ENCODE measurements at regions of chr12 and their contacts with region 1.

Region 1: DNA sequence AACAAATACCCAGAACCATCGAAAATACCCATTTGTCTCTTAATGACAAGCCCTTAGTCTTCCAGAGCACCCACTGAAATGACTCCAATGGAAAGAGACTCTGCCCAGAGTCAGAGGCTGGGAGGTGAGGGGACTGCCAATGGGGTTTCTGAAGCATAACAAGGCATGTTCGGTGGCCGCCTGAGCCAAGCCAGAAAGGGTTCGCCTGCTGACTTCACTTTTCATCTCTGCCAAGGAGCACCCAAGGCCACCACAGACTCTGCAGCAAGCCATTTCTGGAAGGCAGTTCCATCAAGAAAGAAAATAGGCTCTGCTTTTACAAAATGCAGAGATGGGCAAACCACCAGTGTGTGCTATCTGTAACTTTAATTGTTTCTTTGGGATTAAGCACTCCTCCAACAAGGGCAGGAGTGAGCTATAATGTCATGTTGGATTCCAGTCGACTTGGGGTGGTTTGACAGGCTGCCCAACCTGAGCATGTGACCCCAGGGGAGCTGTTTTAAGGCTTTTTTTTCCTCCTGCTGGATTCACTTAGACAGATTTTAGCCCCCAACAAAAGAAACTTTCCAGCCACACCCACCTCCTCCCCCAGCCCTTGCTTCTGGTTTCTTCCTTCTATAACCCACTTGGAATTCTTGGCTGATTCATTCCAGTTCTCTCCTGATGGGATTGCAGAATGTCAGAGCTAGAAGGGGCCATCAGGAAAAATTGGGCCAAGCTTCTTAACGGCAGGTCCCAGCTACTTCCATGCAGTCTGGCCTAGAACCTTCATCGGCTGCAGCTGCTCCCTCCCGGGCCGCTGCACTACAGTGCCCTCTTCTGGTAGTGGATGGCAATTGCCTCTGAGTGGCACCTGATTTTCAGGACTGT is 24.1 kb downstream of the CKAP4 start:
- DNase-seq: peak; percentile 73 to 84 (median 83)
- ATAC-seq: peak; percentile 96
- H3K4me3 ChIP-seq: no peak overlapping the region
- H3K27ac ChIP-seq: no peak overlapping the region
- H3K4me1 ChIP-seq: no peaks in the 10 kb centered on the region
- H3K27me3 ChIP-seq: peaks cover 5 to 8% of the 10 kb centered on the region in 2 experiments; a peak in 3 of 5 replicates
- CTCF ChIP-seq: peak; percentile 84 to 93 (median 85)
- EP300 ChIP-seq: no peak
- POLR2A ChIP-seq: no peak
- RAD21 ChIP-seq: peak; percentile 56 to 79

Region 2: GRCh38 chr12:105420659-105421240 is 803.0 kb before region 1 on chr12:
- CTCF ChIA-PET with region 1: interaction called, 10 read pairs
- POLR2A ChIA-PET with region 1: no interaction called
- in situ Hi-C with region 1: loop called (anchors 10 kb)
- intact Hi-C with region 1: no loop called
- DNase-seq: peak; percentile 67 to 71 (median 70)
- ATAC-seq: peak; percentile 90
- H3K4me3 ChIP-seq: no peak overlapping the region
- H3K27ac ChIP-seq: no peak overlapping the region
- H3K4me1 ChIP-seq: no peaks in the 10 kb centered on the region
- H3K27me3 ChIP-seq: no peaks in the 10 kb centered on the region
- CTCF ChIP-seq: peak; percentile 77 to 90 (median 82)
- EP300 ChIP-seq: no peak
- POLR2A ChIP-seq: no peak
- RAD21 ChIP-seq: peak; percentile 94

Region 3: DNA sequence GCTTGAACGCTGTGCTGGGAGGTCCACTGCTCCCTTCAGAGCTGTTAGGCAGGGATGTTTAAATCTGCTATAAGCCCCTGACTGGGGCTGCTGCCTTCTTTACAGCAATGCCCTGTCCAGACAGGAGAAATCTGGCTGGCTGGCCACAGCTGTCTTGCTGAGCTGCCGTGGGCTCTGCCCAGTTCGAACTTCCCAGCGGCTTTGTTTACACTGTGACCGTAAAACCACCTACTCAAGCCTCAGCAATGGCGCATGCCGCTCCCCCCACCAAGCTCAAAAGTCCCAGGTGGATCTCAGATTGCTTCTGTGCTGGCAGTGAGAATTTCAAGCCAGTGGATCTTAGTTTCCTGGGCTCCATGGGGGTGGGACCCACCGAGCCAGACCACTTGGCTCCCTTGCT is 11.7 kb before region 1 on chr12:
- CTCF ChIA-PET with region 1: no interaction called
- POLR2A ChIA-PET with region 1: no interaction called
- in situ Hi-C with region 1: no loop called
- intact Hi-C with region 1: no loop called
- DNase-seq: no peak
- ATAC-seq: no peak
- H3K4me3 ChIP-seq: no peak overlapping the region
- H3K27ac ChIP-seq: no peak overlapping the region
- H3K4me1 ChIP-seq: no peaks in the 10 kb centered on the region
- H3K27me3 ChIP-seq: peaks cover 0 to 13% of the 10 kb centered on the region in 2 experiments; a peak in 2 of 5 replicates
- CTCF ChIP-seq: no peak
- EP300 ChIP-seq: no peak
- POLR2A ChIP-seq: no peak
- RAD21 ChIP-seq: no peak

Region 4: DNA sequence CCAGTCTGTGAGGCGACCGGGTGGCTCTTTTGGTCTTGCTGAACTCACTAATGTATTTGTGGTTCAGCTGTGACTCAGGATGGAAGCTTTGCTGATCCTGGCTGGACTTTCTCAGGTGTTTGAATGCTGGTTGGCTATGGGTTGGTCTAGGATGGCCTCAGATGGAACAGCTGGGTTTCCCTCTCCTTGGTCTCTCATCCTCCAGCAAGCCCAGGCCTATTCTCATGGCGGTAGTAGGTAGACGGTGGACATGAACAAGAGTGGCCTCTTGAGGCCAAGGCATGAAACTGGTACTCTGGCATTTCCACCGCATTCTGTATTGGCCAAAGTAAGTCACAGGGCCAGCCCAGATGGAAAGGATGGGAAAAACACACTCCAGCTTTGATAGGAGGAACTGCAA is 122.0 kb after region 1 on chr12:
- CTCF ChIA-PET with region 1: interaction called, 13 read pairs
- POLR2A ChIA-PET with region 1: no interaction called
- in situ Hi-C with region 1: loop called (anchors 5 kb)
- intact Hi-C with region 1: loop called (anchors 1 kb)
- DNase-seq: peak in 3 of 4 experiments; percentile 13 to 60 (median 27)
- ATAC-seq: peak; percentile 98
- H3K4me3 ChIP-seq: no peak overlapping the region
- H3K27ac ChIP-seq: no peak overlapping the region
- H3K4me1 ChIP-seq: no peaks in the 10 kb centered on the region
- H3K27me3 ChIP-seq: peaks cover 6 to 7% of the 10 kb centered on the region in 2 experiments; a peak in 4 of 5 replicates
- CTCF ChIP-seq: peak; percentile 58 to 70 (median 67)
- EP300 ChIP-seq: no peak
- POLR2A ChIP-seq: no peak
- RAD21 ChIP-seq: peak in 1 of 2 experiments; percentile 69; a peak in 3 of 4 replicates

Region 5: GRCh38 chr12:106919910-106920544 is 696.3 kb after region 1 on chr12:
- CTCF ChIA-PET with region 1: interaction called, 8 read pairs
- POLR2A ChIA-PET with region 1: no interaction called
- in situ Hi-C with region 1: no loop called
- intact Hi-C with region 1: loop called (anchors 5 kb)
- DNase-seq: peak; percentile 52 to 61 (median 58)
- ATAC-seq: peak; percentile 69
- H3K4me3 ChIP-seq: no peak overlapping the region
- H3K27ac ChIP-seq: no peak overlapping the region
- H3K4me1 ChIP-seq: no peaks in the 10 kb centered on the region
- H3K27me3 ChIP-seq: peaks cover 7 to 11% of the 10 kb centered on the region in 2 experiments; a peak in 3 of 5 replicates
- CTCF ChIP-seq: peak; percentile 47 to 74 (median 64); a peak in 5 of 6 replicates
- EP300 ChIP-seq: no peak
- POLR2A ChIP-seq: no peak
- RAD21 ChIP-seq: peak; percentile 66 to 84

Measured in K562 (cell line).